Astrocyte of the cerebellum (primary cell): ENCODE measurements at regions of chr5 and their contacts with region 1.

Region 1: GRCh38 chr5:65481635-65482295 is at the start of gene ADAMTS6:
- DNase-seq: peak; percentile 93
- H3K4me3 ChIP-seq: peak within 1 kb of the TSS; percentile 59
- CTCF ChIP-seq: no peak

Region 2: GRCh38 chr5:64397552-64397951 is 1084.2 kb before region 1 on chr5:
- in situ Hi-C with region 1: no loop called
- DNase-seq: no peak
- H3K4me3 ChIP-seq: no peak overlapping the region
- CTCF ChIP-seq: no peak

Region 3: GRCh38 chr5:64811050-64811640 is 670.6 kb before region 1 on chr5:
- in situ Hi-C with region 1: loop called (anchors 25 kb)
- DNase-seq: peak; percentile 65
- H3K4me3 ChIP-seq: no peak overlapping the region
- CTCF ChIP-seq: peak; percentile 61

Region 4: GRCh38 chr5:64980176-64980575 is 501.6 kb before region 1 on chr5:
- in situ Hi-C with region 1: loop called (anchors 5 kb)
- DNase-seq: no peak
- H3K4me3 ChIP-seq: no peak overlapping the region
- CTCF ChIP-seq: no peak

Region 5: DNA sequence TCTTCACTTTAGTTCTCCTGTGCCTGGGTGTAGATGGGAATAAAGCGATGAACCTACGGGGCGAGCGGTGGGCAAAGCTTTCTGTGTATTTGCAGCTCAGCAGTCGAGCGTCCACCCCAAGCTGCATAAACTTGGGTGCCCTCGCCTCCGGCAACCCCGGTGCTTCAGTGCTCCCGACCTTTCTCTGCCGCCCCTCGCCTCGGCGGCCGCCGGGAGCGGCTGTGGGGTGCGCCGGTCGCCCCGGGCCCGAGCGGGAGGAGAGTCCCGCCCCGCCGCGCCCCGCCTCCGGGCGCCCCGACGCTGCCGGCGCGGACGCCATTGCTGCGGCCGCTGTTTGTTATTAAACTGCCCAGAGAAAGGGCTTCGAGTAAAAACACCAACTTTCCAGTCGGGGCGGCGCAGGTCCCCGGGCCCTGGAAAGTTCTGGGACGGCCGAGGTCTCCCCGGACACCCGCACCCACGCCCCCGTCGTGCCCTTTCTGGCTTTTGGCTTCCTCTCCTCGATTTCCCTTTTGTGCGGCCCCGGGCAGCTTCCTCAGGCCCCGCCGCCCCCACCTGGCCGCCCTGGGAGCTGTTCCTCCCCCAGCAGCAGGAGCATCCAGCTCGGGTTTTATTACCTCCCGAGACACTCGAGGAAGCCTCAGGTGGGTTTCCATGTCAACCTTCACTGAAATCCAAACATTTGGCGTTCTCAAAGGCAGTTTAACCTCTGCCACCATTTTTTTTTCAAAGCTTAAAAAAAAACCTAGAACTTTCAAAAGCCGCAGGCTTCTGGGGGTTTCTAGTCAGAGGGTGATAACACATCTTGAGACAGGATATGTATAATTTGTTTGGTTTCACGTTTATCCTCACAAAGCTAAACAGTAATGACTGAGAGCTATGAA is 378.7 kb before region 1 on chr5:
- in situ Hi-C with region 1: loop called (anchors 5 kb)
- DNase-seq: peak; percentile 37
- H3K4me3 ChIP-seq: peak overlapping the region; percentile 42
- CTCF ChIP-seq: peak; percentile 30

Region 6: DNA sequence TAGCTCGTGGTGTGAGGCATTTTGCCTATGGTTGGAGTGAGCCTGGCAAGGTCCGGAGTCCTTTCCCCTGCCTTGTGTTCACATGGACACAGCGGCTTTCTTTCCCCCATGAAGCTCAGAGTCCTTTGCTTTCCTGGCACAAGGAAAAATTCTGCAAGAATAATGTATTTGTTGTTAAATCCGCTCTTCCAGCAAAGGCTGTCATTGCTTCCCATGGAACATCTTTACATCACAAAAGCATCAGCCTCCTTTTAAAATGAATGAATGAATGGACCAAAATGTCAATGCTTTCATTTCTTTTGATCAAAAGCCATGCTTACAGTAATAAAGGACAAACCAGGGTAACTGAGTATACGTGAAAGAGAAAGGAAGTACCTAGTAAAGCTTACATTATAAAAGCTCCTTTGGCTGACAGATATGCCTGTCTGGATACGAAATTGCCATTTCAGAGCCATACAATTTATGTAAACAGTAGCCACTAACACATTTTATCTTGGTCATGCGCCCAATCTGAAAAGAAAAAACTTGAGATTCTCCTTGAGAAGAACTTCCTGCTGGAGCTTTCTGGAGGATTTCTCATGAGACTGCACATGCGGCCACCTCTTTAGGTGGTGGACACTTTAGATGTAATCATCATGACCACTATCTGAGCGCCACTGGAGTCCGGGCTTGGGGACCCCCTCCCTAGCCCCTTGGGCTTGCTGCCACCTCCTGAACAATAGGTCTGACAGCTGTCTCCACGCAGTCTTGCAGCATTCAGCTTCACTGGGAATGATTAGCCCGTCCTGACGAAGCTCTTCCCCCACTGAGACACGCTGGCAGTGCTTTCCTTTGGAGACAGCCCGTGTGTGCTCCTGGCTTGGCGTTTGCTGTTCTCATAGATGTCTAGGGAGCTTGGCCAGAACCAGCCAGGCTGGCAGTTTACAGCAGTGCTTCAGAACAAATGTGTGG is 355.9 kb before region 1 on chr5:
- in situ Hi-C with region 1: loop called (anchors 5 kb)
- DNase-seq: no peak
- H3K4me3 ChIP-seq: no peak overlapping the region
- CTCF ChIP-seq: no peak